ENCODE measurements at regions of chr20 and their contacts with region 1.

Region 1: DNA sequence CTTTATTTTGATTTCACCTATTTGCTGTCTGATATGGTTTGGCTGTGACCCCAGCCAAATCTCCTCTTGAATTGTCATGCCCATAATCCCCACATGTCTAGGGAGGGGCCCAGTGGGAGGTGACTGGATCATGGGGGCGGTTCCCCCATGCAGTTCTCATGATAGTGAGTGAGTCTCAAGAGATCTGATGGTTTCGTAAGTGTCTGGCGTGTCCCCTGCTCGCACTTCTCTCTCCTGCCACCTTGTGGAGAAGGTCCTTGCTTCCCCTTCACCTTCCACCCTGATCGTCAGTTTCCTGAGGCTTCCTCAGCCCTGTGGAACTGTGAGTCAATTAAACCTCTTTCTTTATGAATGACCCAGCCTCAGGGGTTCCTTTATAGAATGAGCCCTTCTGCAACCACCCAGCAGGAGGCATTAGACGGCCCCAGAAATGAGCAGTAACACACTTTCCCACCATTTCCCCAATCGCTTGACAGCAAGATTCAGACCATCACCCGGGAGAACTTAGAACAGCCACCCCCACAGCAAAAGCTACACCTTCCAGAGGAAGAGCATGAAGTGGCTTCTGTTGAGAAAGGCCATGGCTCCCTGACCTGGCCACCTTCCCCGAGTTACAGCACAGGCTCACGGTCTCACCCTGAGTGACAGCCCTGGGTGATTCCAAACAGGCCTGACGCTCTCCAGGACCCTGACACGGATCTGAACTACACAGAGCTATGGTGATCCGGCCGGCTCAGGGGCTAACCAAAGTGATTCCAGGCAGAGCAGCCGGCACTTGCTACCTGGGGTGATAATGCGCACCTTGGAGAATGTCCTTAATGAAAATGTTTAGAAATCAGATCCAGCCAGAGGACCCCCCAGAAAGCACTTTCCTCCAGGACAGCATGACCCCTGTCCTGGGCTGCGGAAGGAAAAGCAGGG is 131.2 kb upstream of the CDH4 start:
- DNase-seq: peak; percentile 54
- ATAC-seq: peak; percentile 83

Region 2: GRCh38 chr20:60210779-60211617 is 909.9 kb before region 1 on chr20:
- intact Hi-C with region 1: loop called (anchors 5 kb)
- DNase-seq: peak; percentile 75
- ATAC-seq: peak; percentile 88

Region 3: GRCh38 chr20:61065853-61066252 is 55.0 kb before region 1 on chr20:
- intact Hi-C with region 1: loop called (anchors 10 kb)
- DNase-seq: no peak
- ATAC-seq: no peak

Region 4: GRCh38 chr20:61154217-61154616 is 33.4 kb after region 1 on chr20:
- intact Hi-C with region 1: no loop called
- DNase-seq: no peak
- ATAC-seq: no peak